ENCODE measurements at regions of chr9 and their contacts with region 1.

Region 1: DNA sequence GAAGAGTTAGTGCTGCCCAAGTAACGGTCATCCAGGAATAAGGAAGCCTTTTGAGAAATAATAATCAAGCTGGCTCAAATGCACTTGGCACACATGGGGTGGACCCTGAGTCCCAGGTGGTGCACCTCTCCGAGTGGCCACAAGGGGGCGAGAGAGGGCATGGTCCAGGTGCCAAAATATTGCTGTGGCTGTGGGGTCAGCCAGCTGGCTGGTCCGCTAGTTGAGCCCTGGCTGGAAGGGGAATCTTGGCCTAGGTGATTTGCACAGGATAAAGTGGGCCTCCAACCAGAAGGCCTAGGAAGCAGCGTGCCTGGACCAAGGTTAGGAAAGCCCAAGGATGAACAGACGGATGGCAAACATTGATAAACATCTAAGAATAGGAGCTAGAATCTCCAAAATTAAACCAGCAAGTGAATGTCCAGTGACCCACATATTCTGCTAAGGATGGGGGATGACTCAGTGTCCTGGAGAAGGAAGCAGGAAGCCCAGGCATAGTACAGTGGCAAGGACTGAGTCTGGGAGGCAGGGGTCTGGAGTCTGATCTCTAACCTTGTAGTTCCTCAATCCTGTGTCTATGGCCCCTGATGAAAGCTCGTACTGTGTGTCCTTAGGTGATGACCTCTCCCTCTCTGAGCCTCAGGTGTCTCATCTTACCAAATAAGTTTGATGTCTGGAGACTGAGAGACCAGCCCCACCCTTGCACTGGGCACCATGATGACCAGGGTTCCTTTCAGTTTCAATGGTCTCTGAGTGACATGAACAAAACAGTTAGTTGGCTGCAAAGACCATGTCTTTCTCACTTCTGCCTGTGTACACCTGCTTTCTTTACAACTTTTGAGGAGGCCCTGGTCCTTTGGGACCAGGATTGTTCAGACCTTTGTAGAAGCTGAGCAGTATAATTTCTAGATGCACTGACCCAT is 19.2 kb upstream of the SHB start:
- DNase-seq: peak in 1 of 2 donors; percentile 87
- H3K4me3 ChIP-seq: no peak overlapping the region
- H3K27ac ChIP-seq: no peak overlapping the region
- H3K4me1 ChIP-seq: no peaks in the 10 kb centered on the region
- H3K27me3 ChIP-seq: no peaks in the 10 kb centered on the region
- CTCF ChIP-seq: peak; percentile 78 to 93 (median 85)

Region 2: GRCh38 chr9:37676411-37676830 is 411.8 kb before region 1 on chr9:
- intact Hi-C with region 1: no loop called
- DNase-seq: no peak
- H3K4me3 ChIP-seq: no peak overlapping the region
- H3K27ac ChIP-seq: no peak overlapping the region
- H3K4me1 ChIP-seq: no peaks in the 10 kb centered on the region
- H3K27me3 ChIP-seq: no peaks in the 10 kb centered on the region
- CTCF ChIP-seq: no peak

Region 3: DNA sequence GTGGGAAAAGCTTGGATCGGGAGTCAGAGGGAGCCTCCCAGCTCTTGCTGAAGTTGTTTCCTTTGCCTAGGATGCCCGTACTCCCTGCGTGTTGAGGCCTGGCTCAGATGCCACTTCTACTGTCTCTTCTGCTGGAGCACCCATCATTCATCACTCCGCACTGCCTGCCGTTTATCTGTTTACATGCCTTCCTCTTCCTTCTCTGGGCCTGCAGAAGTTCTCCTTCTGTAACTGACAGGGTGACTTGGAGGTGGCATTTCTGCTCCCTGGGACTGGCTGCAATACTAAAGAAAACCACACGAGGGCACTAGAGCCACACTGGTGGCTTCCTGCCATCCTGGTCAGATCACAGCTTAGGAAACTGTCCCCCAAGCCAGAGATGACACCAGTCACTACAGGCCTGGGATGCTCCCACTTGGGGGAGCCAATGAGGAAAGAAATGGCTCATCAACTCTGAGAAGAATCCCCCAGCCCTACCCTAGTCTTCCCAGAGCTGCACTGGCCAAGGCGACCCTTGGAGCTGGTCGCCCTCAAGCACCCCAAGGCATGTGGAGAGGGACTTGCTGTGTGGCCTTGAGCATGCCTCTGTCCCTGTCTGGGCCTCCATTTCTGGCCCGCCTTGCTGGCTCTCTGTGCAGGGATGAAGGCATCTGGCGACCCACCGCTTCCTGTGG is 174.6 kb before region 1 on chr9:
- intact Hi-C with region 1: loop called (anchors 1 kb)
- DNase-seq: peak; percentile 41 to 90
- H3K4me3 ChIP-seq: no peak overlapping the region
- H3K27ac ChIP-seq: no peak overlapping the region
- H3K4me1 ChIP-seq: no peaks in the 10 kb centered on the region
- H3K27me3 ChIP-seq: no peaks in the 10 kb centered on the region
- CTCF ChIP-seq: peak; percentile 91 to 99 (median 95)

Region 4: DNA sequence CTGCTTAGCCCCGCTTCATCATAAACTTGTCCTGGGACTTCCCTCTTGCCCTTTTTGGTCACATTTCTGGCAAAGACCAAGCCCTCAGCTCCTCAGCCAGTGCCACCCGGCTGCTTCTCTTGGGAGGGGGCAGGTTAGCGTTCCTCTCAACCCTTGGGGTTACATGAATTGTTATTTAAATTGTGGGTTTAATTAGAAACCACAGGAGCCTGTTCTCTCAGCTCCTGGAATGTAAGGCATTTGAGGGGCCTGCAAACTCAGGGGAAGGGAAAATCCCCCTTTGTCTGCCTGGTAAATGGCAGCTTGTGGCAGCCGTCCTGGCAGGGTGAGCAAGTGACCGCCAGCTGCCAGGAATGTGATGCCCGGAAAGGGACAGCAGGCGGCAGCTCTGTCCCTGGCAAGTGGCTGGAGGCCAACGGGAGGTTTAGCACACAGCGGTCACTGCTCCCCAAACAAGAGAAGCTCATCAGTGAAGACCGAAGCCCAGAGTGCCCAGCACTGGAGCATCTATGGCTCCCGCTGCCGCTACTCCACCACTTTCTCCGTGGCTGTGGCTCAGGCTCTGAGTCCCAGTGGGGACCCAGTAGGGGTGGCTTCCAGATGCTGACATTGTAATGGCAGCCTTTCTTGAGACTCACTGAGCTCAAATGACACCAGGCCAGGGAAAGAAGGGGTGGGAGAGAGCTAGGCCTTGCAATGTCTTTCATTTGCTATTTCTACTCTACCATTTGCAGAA is 70.9 kb before region 1 on chr9:
- intact Hi-C with region 1: loop called (anchors 5 kb)
- DNase-seq: peak in 1 of 2 donors; percentile 83
- H3K4me3 ChIP-seq: peak overlapping the region in 1 of 2 donors; percentile 41
- H3K27ac ChIP-seq: peak overlapping the region; percentile 58
- H3K4me1 ChIP-seq: peaks cover 29 to 42% of the 10 kb centered on the region in 2 donors
- H3K27me3 ChIP-seq: no peaks in the 10 kb centered on the region
- CTCF ChIP-seq: peak; percentile 50 to 55 (median 52)

Region 5: GRCh38 chr9:38362852-38363593 is 274.8 kb after region 1 on chr9:
- intact Hi-C with region 1: loop called (anchors 1 kb)
- DNase-seq: peak in 1 of 2 donors; percentile 72
- H3K4me3 ChIP-seq: peak overlapping the region in 1 of 2 donors; percentile 50
- H3K27ac ChIP-seq: no peak overlapping the region
- H3K4me1 ChIP-seq: peaks cover 0 to 3% of the 10 kb centered on the region in 2 donors
- H3K27me3 ChIP-seq: no peaks in the 10 kb centered on the region
- CTCF ChIP-seq: peak; percentile 52 to 73 (median 58)

Region 6: DNA sequence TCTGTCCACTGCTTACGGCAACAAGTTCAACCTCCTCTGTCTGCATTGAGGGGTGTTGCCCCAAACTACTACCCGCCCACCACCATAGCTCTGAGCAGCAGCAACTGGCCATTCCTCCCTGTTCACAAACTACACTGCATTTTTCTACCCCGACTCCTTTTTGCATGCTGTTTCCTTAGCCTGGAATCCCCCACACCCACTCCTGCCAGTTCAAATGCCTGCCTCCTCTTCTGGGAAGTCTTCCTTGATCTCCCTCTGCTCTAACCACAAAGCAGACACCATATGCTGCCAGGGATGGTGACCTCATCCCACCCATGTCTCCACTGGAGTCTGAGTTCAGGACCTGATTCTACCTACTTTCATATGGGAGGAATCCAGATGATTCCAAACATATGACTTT is 317.5 kb after region 1 on chr9:
- intact Hi-C with region 1: loop called (anchors 5 kb)
- DNase-seq: no peak
- H3K4me3 ChIP-seq: no peak overlapping the region
- H3K27ac ChIP-seq: no peak overlapping the region
- H3K4me1 ChIP-seq: peaks cover 0 to 2% of the 10 kb centered on the region in 2 donors
- H3K27me3 ChIP-seq: no peaks in the 10 kb centered on the region
- CTCF ChIP-seq: no peak

Region 7: DNA sequence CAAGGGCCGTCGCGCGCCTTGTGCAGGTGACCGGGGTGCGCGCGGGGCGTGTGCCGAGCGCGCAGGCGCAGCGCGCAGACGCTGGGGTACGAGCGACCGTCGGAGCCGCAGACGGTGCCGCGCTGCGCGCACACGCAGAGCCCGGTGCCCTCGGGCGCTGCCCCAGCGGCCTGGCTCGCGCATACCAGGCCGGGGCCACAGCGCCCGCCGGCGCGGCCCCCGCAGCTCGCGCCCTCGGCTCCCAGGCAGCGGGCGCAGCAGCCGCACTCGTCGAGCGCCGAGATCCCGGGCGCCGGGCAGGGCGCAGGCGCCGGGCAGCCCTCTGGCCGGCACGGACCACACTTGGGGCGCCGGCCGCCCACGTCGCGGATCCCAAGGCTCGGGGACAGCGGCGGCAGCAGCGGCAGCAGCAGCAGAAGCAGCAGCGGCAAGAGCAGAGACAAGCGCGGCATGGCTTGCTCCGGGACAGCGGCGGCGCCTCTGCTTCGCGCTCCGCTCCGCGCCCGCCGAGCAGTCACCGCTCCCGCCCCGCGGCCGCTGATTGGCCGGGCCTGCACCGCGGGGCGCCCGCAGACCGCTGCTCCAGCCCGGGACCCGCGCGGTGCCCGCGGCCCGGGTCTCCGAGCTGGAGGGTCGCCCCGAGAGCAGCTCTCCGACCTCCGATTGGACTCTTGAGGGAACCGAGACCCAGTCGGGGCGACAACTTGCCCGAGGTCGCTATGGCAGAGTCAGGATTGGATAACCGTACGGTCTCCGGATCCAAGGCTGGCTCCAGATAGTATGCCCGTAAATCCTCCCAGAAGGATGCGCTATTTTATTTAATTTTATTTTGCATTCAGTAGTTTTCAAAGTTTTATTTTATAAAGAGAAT is 335.9 kb after region 1 on chr9 and contains the start of gene IGFBPL1:
- intact Hi-C with region 1: loop called (anchors 5 kb)
- DNase-seq: peak in 1 of 2 donors; percentile 65
- H3K4me3 ChIP-seq: peak within 1 kb of the TSS; percentile 69 to 75
- H3K27ac ChIP-seq: peak within 1 kb of the TSS; percentile 68 to 82
- H3K4me1 ChIP-seq: peaks cover 0 to 12% of the 10 kb centered on the region in 2 donors
- H3K27me3 ChIP-seq: no peaks in the 10 kb centered on the region
- CTCF ChIP-seq: no peak
- total RNA-seq, gene IGFBPL1: 4.8 TPM

Region 8: DNA sequence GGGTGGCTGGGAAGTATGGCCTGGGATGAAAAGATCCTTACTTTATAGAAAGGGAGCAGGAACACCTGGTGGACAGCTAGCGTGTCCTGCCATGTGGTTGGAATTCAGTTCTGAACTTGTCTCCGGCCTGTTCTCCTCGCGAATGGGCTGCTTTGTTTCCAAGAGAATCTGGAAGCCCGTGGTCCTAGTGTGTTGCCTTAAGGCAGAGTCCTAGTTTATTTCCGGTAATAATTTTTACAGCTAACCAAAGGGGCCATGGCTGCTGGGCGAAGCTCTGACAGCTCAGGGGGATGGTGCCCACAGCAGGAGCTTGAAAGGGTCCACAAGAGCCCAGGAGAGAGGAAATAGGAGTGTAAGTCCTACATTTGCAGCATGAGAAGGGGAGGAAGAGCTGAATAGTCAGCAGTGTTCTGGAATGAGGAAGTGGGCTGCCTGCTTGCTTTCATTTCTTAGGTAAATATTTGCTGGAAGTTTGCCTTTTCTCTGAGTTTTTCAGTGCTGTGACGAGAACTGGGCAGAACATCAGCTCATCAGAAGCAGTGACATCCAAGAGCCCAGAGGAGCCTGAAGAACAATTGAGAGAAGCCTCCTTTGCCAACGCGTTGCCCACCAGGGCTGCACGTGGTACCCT is 349.0 kb after region 1 on chr9:
- intact Hi-C with region 1: no loop called
- DNase-seq: peak in 1 of 2 donors; percentile 15
- H3K4me3 ChIP-seq: no peak overlapping the region
- H3K27ac ChIP-seq: no peak overlapping the region
- H3K4me1 ChIP-seq: no peaks in the 10 kb centered on the region
- H3K27me3 ChIP-seq: no peaks in the 10 kb centered on the region
- CTCF ChIP-seq: no peak

Region 9: DNA sequence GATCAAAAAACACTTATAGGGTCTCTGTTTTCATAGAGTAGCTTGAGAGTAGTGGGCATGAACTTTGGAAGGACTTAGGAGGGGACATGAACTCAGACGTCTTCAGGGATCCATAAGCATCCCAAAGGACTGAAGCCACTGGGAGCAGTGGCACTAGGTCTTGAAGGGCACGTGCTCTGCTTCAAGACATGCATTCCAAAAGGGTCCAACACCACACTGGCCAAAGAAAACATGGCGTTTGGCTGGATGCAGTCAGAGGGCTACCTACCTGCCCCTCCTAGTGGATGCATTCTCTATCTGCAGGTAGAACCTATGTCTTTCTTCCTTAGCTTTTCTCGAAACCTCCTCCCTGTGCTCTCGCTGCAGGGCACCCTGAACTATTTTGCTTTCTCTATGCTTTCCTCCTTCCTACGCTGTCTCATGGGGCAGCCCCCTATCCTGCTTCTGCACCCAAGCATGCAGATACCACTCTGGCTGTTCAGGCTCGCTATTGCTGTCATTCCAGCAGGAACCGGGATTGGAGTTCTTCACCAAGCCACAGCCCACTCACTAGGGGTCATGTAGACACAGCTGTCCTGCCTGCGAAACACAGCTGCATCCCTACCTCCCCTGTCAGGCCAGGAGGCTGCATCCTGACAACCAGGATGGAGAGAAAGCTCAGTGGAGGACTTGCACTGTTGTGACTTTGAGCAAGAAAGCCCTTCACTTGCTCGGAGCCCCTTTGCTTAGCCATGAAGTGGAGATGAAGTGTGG is 619.8 kb after region 1 on chr9:
- intact Hi-C with region 1: no loop called
- DNase-seq: no peak
- H3K4me3 ChIP-seq: no peak overlapping the region
- H3K27ac ChIP-seq: no peak overlapping the region
- H3K4me1 ChIP-seq: no peaks in the 10 kb centered on the region
- H3K27me3 ChIP-seq: no peaks in the 10 kb centered on the region
- CTCF ChIP-seq: no peak